Tibial artery (tissue), 4 donors: ENCODE measurements at regions of chrX and their contacts with region 1.

Region 1: GRCh38 chrX:134764212-134764785 is 106.0 kb upstream of the PLAC1 start:
- DNase-seq: no peak
- H3K4me3 ChIP-seq: no peak overlapping the region
- H3K27ac ChIP-seq: no peak overlapping the region
- H3K4me1 ChIP-seq: no peaks in the 10 kb centered on the region
- H3K27me3 ChIP-seq: no peaks in the 10 kb centered on the region
- CTCF ChIP-seq: no peak

Region 2: DNA sequence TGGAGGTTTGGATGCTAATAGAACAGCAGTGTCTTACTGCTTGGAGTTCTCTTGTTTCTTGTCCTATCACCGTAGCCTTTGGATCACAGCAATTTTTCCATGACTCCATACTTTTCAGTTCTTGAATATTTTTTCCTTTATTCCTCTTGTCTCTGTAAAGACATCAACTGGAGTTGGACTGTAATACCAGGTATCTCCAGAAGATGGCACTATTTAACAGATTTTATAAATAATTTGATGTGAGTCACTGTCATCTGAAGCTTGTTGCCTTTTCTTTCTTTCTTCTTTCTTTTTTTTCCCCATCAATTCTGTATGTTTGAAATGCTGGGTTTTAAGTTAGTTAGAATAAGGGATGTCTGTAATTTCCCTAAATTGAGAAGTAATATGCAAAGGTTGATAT is 280.3 kb before region 1 on chrX:
- intact Hi-C with region 1: loop called (anchors 10 kb)
- DNase-seq: no peak
- H3K4me3 ChIP-seq: no peak overlapping the region
- H3K27ac ChIP-seq: no peak overlapping the region
- H3K4me1 ChIP-seq: no peaks in the 10 kb centered on the region
- H3K27me3 ChIP-seq: no peaks in the 10 kb centered on the region
- CTCF ChIP-seq: peak; percentile 48 to 51